ENCODE measurements at regions of chrX and their contacts with region 1.

Region 1: DNA sequence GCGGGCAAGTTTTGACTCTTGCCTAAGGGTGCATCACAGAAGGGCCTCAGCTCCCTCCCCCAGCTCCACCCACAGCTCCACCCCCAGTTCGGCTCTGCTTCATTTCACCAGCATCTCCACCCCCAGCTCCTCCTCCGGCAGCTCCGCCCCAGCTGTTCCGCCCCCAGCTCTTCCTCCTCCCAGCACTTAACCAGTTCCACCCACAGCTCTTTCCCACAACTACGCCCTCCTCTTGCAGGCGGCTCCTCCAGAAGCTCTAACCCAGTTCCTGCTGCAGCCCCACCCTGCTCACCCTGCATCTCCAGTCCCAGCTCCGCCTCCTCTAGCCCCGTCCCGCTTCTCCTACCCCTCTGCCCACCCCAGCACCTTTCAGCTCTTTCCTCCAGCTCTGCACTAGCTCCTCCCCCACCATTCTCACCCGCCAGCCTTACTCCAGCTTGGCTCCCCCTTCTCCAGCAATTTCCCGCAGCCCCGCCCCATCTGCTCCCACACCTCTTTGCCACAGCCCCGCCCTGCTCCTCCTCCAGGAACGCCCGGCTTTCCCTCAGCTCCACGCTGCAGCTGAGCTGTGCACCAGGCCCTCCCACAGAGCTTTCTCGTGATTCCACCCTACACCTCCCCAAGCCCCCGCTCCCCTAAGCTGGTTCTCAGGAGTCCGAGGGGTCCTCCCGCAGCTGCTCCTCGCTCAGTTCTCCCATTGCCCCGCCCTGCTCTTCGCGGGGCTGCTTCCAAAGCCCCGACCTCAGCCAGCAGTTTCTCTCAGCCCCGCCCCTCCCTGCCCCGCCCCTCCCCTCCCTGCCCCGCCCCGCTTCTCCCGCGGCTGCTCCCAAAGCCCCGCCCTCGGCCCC is 1.3 kb upstream of the EOLA1 start:
- DNase-seq: peak; percentile 91
- ATAC-seq: peak; percentile 46
- H3K4me3 Mint-ChIP-seq: peak overlapping the region; percentile 82
- H3K27ac Mint-ChIP-seq: peak overlapping the region; percentile 82
- H3K4me1 Mint-ChIP-seq: peaks cover 9% of the 10 kb centered on the region
- H3K27me3 Mint-ChIP-seq: no peaks in the 10 kb centered on the region

Region 2: DNA sequence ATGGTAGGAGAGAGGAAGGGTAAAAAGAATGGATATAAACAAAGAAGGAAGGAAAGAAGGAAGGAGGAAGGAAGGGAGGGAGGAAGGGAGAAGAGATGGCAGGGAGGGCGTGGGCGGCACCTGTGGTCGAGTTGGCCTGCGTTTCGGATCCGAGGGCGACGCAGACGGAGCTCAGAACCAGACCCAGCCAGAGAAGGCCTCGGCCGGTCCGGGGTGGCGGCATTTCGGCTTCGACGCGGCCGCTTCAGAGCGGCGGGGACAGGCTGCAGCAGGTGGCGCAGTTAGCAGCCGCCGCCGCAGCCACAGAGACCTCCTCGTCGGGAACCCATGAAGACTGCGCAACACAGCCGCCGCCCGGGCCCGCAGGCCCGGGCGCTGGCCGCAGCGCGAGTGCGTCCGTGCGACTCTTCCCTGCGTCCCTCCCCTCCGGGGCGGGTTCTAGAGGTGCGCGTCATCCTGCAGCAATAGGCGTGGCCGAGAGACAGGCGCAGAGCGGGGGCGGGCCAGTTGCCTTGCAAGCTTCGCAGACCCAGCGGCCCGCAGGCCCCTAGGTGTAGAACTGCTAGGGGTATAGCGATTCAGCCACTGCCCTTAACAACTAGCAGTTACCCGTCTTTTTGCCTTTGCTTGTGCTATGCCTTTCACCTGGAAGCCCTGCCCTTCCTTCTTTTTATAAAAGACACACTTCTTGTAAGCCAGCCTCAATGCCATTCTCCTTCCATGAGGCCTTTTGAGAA is 34.4 kb before region 1 on chrX and contains the start of gene IDS:
- CTCF ChIA-PET with region 1: interaction called, 5 read pairs
- POLR2A ChIA-PET with region 1: interaction called, 12 read pairs
- intact Hi-C with region 1: loop called (anchors 2 kb)
- DNase-seq: peak; percentile 93
- ATAC-seq: peak; percentile 74
- H3K4me3 Mint-ChIP-seq: peak within 1 kb of the TSS; percentile 99
- H3K27ac Mint-ChIP-seq: peak within 1 kb of the TSS; percentile 99
- H3K4me1 Mint-ChIP-seq: peaks cover 31% of the 10 kb centered on the region
- H3K27me3 Mint-ChIP-seq: peaks cover under 1% of the 10 kb centered on the region
- total RNA-seq, gene IDS: 52.6 to 64.3 TPM